ENCODE measurements at regions of chr18 and their contacts with region 1.

Region 1: GRCh38 chr18:56148373-56148772 is 490.0 kb downstream of the TXNL1 start:
- DNase-seq: peak; percentile 97
- ATAC-seq: peak; percentile 91
- H3K4me3 ChIP-seq: no peak overlapping the region
- H3K27ac ChIP-seq: no peak overlapping the region
- H3K4me1 ChIP-seq: peaks cover 3% of the 10 kb centered on the region; the same call in 1 of the 2 replicates
- H3K27me3 ChIP-seq: no peaks in the 10 kb centered on the region
- CTCF ChIP-seq: no peak
- POLR2A ChIP-seq: no peak
- RAD21 ChIP-seq: peak; percentile 14; the same call in 1 of the 2 replicates

Region 2: DNA sequence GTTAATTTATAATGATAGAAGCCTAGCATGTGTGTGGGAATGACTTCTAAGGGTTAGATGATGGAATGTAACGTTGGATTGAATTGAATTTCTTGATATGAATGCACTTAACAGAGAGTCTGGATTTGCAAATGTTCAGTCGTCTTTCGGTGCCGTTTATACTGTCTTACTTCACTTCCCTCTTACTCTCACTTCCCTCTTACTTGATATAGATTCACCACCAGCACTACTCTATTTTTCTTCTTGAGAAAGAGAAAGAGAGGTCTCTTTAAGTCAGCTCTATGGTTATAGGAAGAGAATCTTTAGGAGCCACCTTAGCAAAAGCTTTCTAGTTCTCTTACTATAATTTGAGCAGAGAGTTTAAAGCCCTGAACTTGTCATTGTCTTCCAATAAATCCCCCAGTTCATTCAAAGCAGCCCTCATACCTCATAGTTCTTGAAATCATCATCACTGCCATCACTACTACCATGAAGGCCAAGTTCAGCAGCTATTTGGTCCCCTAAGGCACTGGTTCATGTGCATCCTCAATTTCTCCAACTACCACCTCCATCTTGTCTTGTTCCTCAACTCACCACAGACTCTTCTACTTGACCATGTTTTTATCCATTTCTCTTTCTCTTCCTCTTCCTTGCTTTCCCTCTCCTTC is 58.6 kb before region 1 on chr18:
- CTCF ChIA-PET with region 1: no interaction called
- POLR2A ChIA-PET with region 1: no interaction called
- dilution Hi-C with region 1: no loop called
- in situ Hi-C with region 1: no loop called
- intact Hi-C with region 1: no loop called
- DNase-seq: no peak
- ATAC-seq: no peak
- H3K4me3 ChIP-seq: no peak overlapping the region
- H3K27ac ChIP-seq: no peak overlapping the region
- H3K4me1 ChIP-seq: peaks cover 2% of the 10 kb centered on the region; the same call in 1 of the 2 replicates
- H3K27me3 ChIP-seq: no peaks in the 10 kb centered on the region
- CTCF ChIP-seq: no peak
- POLR2A ChIP-seq: no peak
- RAD21 ChIP-seq: no peak

Region 3: DNA sequence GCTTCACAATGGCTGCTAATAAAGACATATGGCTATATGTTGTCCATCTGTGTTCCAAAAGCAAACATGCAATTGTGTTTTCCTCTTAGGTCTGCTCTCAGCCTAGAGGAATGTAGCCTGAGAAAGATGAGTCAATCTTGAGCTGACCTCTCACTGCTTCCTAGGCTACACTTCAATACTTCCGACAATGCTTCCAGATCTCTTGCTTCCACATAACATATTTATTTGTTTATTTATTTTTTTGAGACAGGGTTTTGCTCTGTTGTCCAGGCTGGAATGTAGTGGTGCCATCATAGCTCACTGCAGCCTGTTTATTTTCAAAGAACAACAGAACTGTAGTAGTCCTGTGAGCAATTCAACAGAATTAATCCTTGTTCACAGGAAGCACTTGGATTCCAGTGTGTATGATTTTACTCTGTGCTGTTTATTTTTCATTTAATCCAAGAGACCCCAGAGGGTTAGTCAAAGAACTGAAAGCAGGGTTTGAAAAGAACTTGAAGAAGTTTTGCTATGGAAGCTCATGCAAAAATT is 52.1 kb after region 1 on chr18:
- CTCF ChIA-PET with region 1: no interaction called
- POLR2A ChIA-PET with region 1: no interaction called
- dilution Hi-C with region 1: no loop called
- in situ Hi-C with region 1: no loop called
- intact Hi-C with region 1: loop called (anchors 2 kb)
- DNase-seq: peak; percentile 88
- ATAC-seq: peak; percentile 93
- H3K4me3 ChIP-seq: no peak overlapping the region
- H3K27ac ChIP-seq: peak overlapping the region; percentile 84
- H3K4me1 ChIP-seq: peaks cover 15% of the 10 kb centered on the region
- H3K27me3 ChIP-seq: no peaks in the 10 kb centered on the region
- CTCF ChIP-seq: no peak
- POLR2A ChIP-seq: no peak
- RAD21 ChIP-seq: no peak

Measured in IMR-90 (cell line).